ENCODE measurements at regions of chr17 and their contacts with region 1.

Region 1: DNA sequence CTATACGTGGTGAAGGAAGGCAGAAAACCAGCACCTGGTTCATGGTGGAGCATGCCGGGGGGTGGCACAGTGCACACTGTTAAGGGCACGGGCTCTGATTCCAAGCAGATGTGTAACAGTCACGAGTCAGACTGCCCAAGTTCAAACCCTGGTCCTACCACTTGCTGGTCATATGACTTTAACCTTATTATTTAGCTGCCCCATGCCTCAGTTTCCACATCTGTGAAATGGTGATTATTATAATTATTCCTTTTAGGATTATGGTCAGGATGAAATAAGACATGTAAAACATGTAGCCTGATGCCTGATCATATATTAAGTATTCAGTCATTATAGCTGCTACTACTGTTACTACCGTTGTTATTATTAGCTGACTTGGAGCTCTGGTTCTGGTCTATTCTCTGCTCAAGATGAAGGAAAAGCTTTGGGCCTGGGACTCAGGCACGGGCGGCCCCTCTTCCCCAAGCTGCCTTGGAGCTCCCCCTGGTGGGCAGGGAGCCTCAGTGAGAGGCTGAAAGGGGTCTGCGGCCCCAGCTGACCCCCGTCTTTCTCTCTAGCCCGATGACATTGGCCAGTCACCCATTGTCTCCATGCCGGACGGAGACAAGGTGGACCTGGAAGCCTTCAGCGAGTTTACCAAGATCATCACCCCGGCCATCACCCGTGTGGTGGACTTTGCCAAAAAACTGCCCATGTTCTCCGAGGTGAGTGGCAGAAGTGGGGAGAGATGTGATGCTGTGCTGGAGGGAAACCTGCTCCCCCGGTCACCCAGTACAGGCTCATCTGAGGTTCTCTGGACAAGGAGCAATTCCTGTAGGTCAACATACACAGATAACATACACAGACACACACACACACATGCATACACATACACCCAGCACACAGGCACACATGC is 14.0 kb downstream of the NR1D1 start:
- DNase-seq: peak; percentile 63
- ATAC-seq: peak; percentile 75
- H3K4me3 Mint-ChIP-seq: no peak overlapping the region
- H3K27ac Mint-ChIP-seq: no peak overlapping the region
- H3K4me1 Mint-ChIP-seq: peaks cover 6% of the 10 kb centered on the region
- H3K27me3 Mint-ChIP-seq: no peaks in the 10 kb centered on the region
- CTCF ChIP-seq: peak; percentile 26

Region 2: GRCh38 chr17:40018211-40019121 is 67.9 kb before region 1 on chr17:
- CTCF ChIA-PET with region 1: interaction called, 12 read pairs
- POLR2A ChIA-PET with region 1: no interaction called
- intact Hi-C with region 1: loop called (anchors 1 kb)
- DNase-seq: no peak
- ATAC-seq: no peak
- H3K4me3 Mint-ChIP-seq: no peak overlapping the region
- H3K27ac Mint-ChIP-seq: no peak overlapping the region
- H3K4me1 Mint-ChIP-seq: peaks cover 5% of the 10 kb centered on the region
- H3K27me3 Mint-ChIP-seq: peaks cover 2% of the 10 kb centered on the region
- CTCF ChIP-seq: no peak

Region 3: DNA sequence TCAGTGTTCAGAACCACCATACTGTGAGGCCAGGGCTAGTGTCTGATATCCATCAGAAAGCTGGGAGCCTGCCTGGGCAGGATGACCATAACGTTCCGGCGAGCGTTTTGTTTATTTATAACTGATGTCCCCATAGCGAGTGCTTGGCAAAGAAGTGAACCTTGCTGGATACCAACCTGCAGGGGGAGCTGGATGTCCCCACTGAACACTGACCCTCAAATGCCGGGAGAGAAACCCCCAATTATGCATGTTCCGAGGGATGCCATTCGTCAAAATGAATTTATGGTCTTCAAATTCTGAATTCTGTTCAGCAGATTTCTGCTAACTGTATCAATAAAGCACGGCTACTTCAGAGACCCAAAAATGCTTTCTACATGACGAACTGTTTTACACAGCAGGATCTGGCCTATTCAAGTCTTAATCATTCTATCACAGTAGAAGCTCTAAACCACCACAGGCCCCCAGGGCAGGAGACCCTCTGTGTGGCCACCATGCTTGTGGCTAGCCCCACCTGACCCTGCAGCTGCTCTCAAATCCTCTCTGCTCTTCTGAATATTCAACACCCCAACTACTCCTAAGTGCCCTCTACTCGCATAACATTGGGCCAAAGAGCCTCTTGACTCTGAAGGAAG is 47.4 kb before region 1 on chr17:
- CTCF ChIA-PET with region 1: interaction called, 16 read pairs
- POLR2A ChIA-PET with region 1: no interaction called
- intact Hi-C with region 1: loop called (anchors 2 kb)
- DNase-seq: no peak
- ATAC-seq: no peak
- H3K4me3 Mint-ChIP-seq: no peak overlapping the region
- H3K27ac Mint-ChIP-seq: no peak overlapping the region
- H3K4me1 Mint-ChIP-seq: no peaks in the 10 kb centered on the region
- H3K27me3 Mint-ChIP-seq: no peaks in the 10 kb centered on the region
- CTCF ChIP-seq: no peak

Region 4: DNA sequence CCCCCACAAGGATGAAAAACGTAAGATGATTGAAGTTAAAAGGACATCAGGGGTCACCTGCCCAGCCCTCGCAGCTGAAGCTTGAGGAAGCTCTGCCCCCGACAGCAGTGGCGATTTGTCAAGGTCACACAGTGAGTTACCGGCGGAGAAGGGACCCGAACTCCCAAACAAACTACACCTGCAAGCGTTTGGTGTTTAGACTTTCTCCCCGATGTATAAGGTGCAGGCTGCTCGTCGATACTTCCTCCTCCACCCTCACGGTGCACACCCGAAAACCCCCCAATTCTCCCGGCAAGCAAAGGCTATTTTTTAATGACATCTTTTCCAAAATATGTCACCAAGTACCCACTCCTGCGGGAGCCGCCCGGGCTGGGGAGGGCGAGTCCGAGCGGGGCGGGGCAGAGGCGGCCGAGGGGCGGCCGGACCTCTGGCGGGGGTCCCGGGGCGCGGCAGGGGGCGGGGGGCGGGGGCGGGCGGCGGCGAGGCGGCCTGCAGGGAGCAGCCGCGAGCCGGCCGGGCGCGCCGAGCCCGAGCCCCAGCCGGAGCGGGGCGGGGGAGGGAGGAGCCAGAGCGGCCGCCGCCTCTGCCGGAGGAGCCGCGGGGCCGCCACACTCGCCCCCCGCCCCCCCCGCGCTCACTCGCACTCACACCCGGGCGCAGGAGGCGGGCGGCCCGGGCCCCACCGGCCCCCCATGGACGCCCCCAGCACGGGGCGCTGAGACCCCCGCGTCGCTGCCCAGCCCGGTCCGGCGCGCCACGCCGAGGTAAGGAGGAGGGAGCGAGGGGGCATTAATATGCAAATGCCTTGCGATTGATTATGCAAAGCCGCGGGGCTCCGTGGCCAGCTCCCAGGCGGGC is 23.8 kb before region 1 on chr17 and contains the start of gene THRA:
- CTCF ChIA-PET with region 1: interaction called, 11 read pairs
- POLR2A ChIA-PET with region 1: interaction called, 3 read pairs
- intact Hi-C with region 1: loop called (anchors 1 kb)
- DNase-seq: peak; percentile 79
- ATAC-seq: peak; percentile 93
- H3K4me3 Mint-ChIP-seq: peak within 1 kb of the TSS; percentile 87
- H3K27ac Mint-ChIP-seq: peak within 1 kb of the TSS; percentile 78
- H3K4me1 Mint-ChIP-seq: peaks cover 39% of the 10 kb centered on the region
- H3K27me3 Mint-ChIP-seq: peaks cover under 1% of the 10 kb centered on the region
- CTCF ChIP-seq: no peak
- total RNA-seq, gene THRA: 5.4 and 5.9 TPM in 2 replicates

Region 5: DNA sequence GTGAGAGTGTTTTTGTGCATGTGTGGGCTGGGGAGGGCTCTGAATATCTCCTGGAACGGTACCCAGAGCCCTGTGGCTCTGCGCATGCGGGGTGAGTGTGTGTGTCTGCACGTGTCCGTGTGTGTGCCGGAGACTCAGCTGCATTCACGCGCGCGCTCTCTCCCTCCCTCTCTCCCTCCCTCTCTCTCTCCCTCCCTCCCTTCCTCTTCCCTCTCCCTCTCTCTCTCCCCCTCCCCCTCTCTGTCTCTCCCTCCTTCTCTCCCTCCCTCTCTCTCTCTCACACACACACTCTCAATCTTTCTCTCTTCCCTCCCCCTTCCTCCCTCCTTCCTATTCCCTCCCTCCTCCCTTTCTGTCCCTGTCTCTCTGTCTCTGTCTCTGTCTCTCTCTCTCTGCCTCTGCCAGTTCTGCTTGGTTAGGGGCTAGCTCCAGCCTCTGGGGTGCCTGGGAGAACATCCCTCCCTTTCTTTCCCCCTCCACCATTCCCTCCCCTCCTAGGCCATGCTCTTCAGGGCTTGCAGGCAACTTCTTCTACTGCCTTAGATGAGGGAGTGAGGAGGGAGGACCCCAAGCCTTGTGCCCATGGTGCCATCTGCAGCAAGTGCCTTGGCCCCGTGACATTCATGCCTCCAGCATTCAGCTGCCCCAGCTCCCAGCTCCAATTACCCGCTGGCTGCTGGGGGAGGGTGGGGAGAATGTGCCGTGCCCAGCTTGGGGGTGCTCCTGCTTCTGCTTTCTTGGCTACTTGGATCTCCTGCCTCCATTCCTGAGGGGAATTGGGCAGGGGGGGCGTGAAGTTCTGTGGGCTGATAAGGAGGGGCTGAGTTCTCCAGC is 17.3 kb before region 1 on chr17:
- CTCF ChIA-PET with region 1: interaction called, 38 read pairs
- POLR2A ChIA-PET with region 1: interaction called, 3 read pairs
- intact Hi-C with region 1: no loop called
- DNase-seq: peak; percentile 59
- ATAC-seq: peak; percentile 74
- H3K4me3 Mint-ChIP-seq: peak overlapping the region; percentile 86
- H3K27ac Mint-ChIP-seq: peak overlapping the region; percentile 77
- H3K4me1 Mint-ChIP-seq: peaks cover 65% of the 10 kb centered on the region
- H3K27me3 Mint-ChIP-seq: no peaks in the 10 kb centered on the region
- CTCF ChIP-seq: no peak

Region 6: GRCh38 chr17:40075201-40075941 is 11.0 kb before region 1 on chr17:
- CTCF ChIA-PET with region 1: interaction called, 38 read pairs
- POLR2A ChIA-PET with region 1: interaction called, 6 read pairs
- intact Hi-C with region 1: no loop called
- DNase-seq: peak; percentile 52
- ATAC-seq: peak; percentile 96
- H3K4me3 Mint-ChIP-seq: no peak overlapping the region
- H3K27ac Mint-ChIP-seq: peak overlapping the region; percentile 16
- H3K4me1 Mint-ChIP-seq: peaks cover 29% of the 10 kb centered on the region
- H3K27me3 Mint-ChIP-seq: no peaks in the 10 kb centered on the region
- CTCF ChIP-seq: peak; percentile 61

Region 7: GRCh38 chr17:40168262-40168832 is 82.0 kb after region 1 on chr17:
- CTCF ChIA-PET with region 1: interaction called, 12 read pairs
- POLR2A ChIA-PET with region 1: no interaction called
- intact Hi-C with region 1: no loop called
- DNase-seq: no peak
- ATAC-seq: peak; percentile 85
- H3K4me3 Mint-ChIP-seq: no peak overlapping the region
- H3K27ac Mint-ChIP-seq: no peak overlapping the region
- H3K4me1 Mint-ChIP-seq: no peaks in the 10 kb centered on the region
- H3K27me3 Mint-ChIP-seq: no peaks in the 10 kb centered on the region
- CTCF ChIP-seq: no peak

Measured in activated B cell treated with CpG ODN at 0.5 μM for 24 hours (primary cell).